ENCODE measurements at regions of chr21 and their contacts with region 1.

Region 1: GRCh38 chr21:46243960-46244361 is 15.4 kb upstream of the LSS start:
- DNase-seq: no peak
- ATAC-seq: no peak
- H3K4me3 ChIP-seq: no peak overlapping the region
- H3K27ac ChIP-seq: no peak overlapping the region
- H3K4me1 ChIP-seq: no peaks in the 10 kb centered on the region
- H3K27me3 ChIP-seq: no peaks in the 10 kb centered on the region
- CTCF ChIP-seq: no peak

Region 2: GRCh38 chr21:46025113-46025770 is 218.7 kb before region 1 on chr21:
- intact Hi-C with region 1: no loop called
- DNase-seq: no peak
- ATAC-seq: no peak
- H3K4me3 ChIP-seq: no peak overlapping the region
- H3K27ac ChIP-seq: no peak overlapping the region
- H3K4me1 ChIP-seq: no peaks in the 10 kb centered on the region
- H3K27me3 ChIP-seq: peaks cover 0 to 4% (median 0%) of the 10 kb centered on the region in 3 donors
- CTCF ChIP-seq: no peak

Region 3: GRCh38 chr21:46424039-46424591 is 180.2 kb after region 1 on chr21:
- intact Hi-C with region 1: loop called in 1 of 2 experiments (anchors 10 kb)
- DNase-seq: peak in 1 of 2 donors; percentile 42
- ATAC-seq: peak in 3 of 4 donors; percentile 4 to 11 (median 6)
- H3K4me3 ChIP-seq: no peak overlapping the region
- H3K27ac ChIP-seq: no peak overlapping the region
- H3K4me1 ChIP-seq: no peaks in the 10 kb centered on the region
- H3K27me3 ChIP-seq: no peaks in the 10 kb centered on the region
- CTCF ChIP-seq: no peak

Region 4: DNA sequence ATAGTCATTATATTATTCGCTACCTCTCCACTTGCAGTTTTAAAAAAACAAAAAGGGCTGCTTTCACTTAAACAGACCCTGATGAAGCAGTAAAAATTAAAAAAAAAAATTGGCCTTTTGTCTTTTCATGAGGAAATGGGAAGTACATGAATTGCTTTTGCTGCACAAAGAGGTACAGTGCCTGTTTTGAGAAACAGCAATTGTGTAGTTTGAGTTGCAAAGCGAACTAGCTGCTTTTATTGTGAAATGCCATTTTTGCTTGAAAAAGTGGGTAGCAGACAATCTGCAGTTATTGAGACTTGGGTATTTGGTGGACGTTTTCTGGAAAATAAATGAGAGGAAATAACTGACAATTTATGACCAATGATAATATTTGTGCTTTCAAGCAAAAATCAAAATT is 221.7 kb after region 1 on chr21:
- intact Hi-C with region 1: loop called in 1 of 2 experiments (anchors 5 kb)
- DNase-seq: no peak
- ATAC-seq: no peak
- H3K4me3 ChIP-seq: no peak overlapping the region
- H3K27ac ChIP-seq: no peak overlapping the region
- H3K4me1 ChIP-seq: peaks cover 10% of the 10 kb centered on the region
- H3K27me3 ChIP-seq: no peaks in the 10 kb centered on the region
- CTCF ChIP-seq: no peak

Measured in psoas muscle (tissue), 8 donors.